CD8-positive, alpha-beta memory T cell (primary cell): ENCODE measurements at regions of chr17 and their contacts with region 1.

Region 1: DNA sequence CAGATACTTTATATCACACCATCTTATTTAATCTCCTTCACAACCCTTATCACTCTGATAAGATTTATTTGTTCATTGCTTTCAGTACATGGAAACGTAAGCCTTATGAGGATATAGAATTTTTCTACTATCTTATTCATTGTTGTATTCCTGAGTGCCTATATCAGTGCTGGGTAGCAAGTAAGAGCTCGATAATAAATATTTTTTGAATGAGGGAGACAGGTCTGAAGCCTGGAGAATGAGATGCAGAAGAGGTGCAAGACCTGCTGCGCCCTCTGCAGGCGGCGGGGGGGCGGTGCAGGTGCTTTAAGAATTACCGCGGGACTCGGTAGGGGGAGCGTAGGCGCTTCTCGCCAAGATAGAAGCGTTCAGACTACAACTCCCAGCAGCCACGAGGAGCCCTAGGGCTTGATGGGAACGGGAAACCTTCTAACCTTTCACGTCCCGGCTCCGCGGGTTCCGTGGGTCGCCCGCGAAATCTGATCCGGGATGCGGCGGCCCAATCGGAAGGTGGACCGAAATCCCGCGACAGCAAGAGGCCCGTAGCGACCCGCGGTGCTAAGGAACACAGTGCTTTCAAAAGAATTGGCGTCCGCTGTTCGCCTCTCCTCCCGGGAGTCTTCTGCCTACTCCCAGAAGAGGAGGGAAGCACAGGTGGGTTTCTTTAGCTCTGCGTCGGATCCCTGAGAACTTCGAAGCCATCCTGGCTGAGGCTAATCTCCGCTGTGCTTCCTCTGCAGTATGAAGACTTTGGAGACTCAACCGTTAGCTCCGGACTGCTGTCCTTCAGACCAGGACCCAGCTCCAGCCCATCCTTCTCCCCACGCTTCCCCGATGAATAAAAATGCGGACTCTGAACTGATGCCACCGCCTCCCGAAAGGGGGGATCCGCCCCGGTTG is at the start of gene WRAP53:
- DNase-seq: peak; percentile 88 to 96 (median 94)
- H3K4me3 ChIP-seq: peak within 1 kb of the TSS; percentile 99
- H3K4me3 Mint-ChIP-seq: peak within 1 kb of the TSS; percentile 93 to 99 (median 98)
- H3K27ac ChIP-seq: peak within 1 kb of the TSS; percentile 99
- H3K27ac Mint-ChIP-seq: peak within 1 kb of the TSS; percentile 98 to 100 (median 100)
- H3K4me1 ChIP-seq: peaks cover 37% of the 10 kb centered on the region
- H3K4me1 Mint-ChIP-seq: peaks cover 39 to 55% (median 44%) of the 10 kb centered on the region in 3 donors
- H3K27me3 ChIP-seq: no peaks in the 10 kb centered on the region
- H3K27me3 Mint-ChIP-seq: peaks cover 0 to 7% of the 10 kb centered on the region in 2 donors
- total RNA-seq, gene WRAP53: 29.1 to 31.3 TPM

Region 2: DNA sequence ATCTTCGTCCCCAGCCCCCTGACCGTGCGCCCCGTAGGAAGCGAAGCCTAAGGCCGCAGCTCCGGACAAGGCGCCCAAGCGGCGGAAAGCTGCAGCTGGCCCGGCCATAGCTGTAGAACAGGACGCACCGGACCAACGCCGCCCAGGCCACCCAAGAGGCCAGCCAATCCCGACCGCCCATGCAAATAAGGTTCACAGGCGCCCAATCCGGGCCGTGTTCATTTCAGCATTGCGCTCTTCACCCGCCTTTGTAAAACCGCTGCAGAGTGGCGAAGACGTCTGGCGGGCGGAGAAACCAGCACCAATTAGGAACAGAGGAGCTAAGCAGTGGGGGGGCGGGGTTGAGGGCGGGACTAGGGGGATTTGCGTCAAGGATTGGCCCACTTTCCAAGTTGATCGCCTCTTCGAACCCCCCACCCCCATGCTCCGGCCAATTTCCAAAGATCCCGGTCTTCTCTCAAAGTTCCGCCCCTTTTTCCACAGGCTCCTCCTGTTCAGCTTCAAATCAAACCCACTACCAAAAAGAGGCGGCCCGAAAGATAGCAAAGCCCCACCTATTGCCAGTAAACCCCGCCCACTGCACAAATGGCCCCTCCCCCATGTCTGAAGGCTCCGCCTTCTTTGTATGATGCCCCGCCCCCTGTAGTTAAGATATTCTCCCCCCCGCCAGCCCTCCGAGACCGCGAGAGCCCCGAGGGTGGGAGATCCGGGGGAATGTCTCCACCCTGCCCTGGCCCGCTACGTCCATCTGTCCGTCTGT is 284.0 kb before region 1 on chr17 and contains the start of gene TMEM256:
- CTCF ChIA-PET with region 1: interaction called, 5 read pairs
- POLR2A ChIA-PET with region 1: interaction called, 10 read pairs
- DNase-seq: peak; percentile 91 to 97 (median 95)
- H3K4me3 ChIP-seq: peak within 1 kb of the TSS; percentile 90
- H3K4me3 Mint-ChIP-seq: peak within 1 kb of the TSS; percentile 90 to 99 (median 97)
- H3K27ac ChIP-seq: peak within 1 kb of the TSS; percentile 67
- H3K27ac Mint-ChIP-seq: peak within 1 kb of the TSS; percentile 83 to 99 (median 96)
- H3K4me1 ChIP-seq: peaks cover 16% of the 10 kb centered on the region
- H3K4me1 Mint-ChIP-seq: peaks cover 17 to 36% (median 21%) of the 10 kb centered on the region in 3 donors
- H3K27me3 ChIP-seq: no peaks in the 10 kb centered on the region
- H3K27me3 Mint-ChIP-seq: peaks cover 0 to 2% of the 10 kb centered on the region in 2 donors
- total RNA-seq, gene TMEM256: 45.4 to 51.4 TPM

Region 3: GRCh38 chr17:7515911-7516610 is 172.1 kb before region 1 on chr17:
- CTCF ChIA-PET with region 1: interaction called, 18 read pairs
- POLR2A ChIA-PET with region 1: interaction called, 9 read pairs
- DNase-seq: no peak
- H3K4me3 ChIP-seq: no peak overlapping the region
- H3K4me3 Mint-ChIP-seq: no peak overlapping the region
- H3K27ac ChIP-seq: no peak overlapping the region
- H3K27ac Mint-ChIP-seq: peak overlapping the region in 4 of 8 donors; percentile 29 to 79 (median 63)
- H3K4me1 ChIP-seq: no peaks in the 10 kb centered on the region
- H3K4me1 Mint-ChIP-seq: no peaks in the 10 kb centered on the region
- H3K27me3 ChIP-seq: no peaks in the 10 kb centered on the region
- H3K27me3 Mint-ChIP-seq: no peaks in the 10 kb centered on the region

Region 4: GRCh38 chr17:7583253-7584109 is 104.7 kb before region 1 on chr17 and contains the start of gene MPDU1:
- CTCF ChIA-PET with region 1: interaction called, 33 read pairs
- POLR2A ChIA-PET with region 1: interaction called, 70 read pairs
- DNase-seq: peak; percentile 90 to 97 (median 96)
- H3K4me3 ChIP-seq: peak within 1 kb of the TSS; percentile 98
- H3K4me3 Mint-ChIP-seq: peak within 1 kb of the TSS; percentile 99 to 100 (median 99)
- H3K27ac ChIP-seq: peak within 1 kb of the TSS; percentile 98
- H3K27ac Mint-ChIP-seq: peak within 1 kb of the TSS; percentile 99 to 100 (median 100)
- H3K4me1 ChIP-seq: peaks cover 40% of the 10 kb centered on the region
- H3K4me1 Mint-ChIP-seq: peaks cover 50 to 60% (median 52%) of the 10 kb centered on the region in 3 donors
- H3K27me3 ChIP-seq: no peaks in the 10 kb centered on the region
- H3K27me3 Mint-ChIP-seq: peaks cover 0 to 4% of the 10 kb centered on the region in 2 donors
- total RNA-seq, gene MPDU1: 115 to 124 TPM

Region 5: GRCh38 chr17:7614422-7615264 is 73.5 kb before region 1 on chr17 and contains the start of gene FXR2:
- CTCF ChIA-PET with region 1: interaction called, 29 read pairs
- POLR2A ChIA-PET with region 1: interaction called, 61 read pairs
- DNase-seq: peak; percentile 98 to 99 (median 98)
- H3K4me3 ChIP-seq: peak within 1 kb of the TSS; percentile 93
- H3K4me3 Mint-ChIP-seq: peak within 1 kb of the TSS; percentile 82 to 96 (median 92)
- H3K27ac ChIP-seq: peak within 1 kb of the TSS; percentile 88
- H3K27ac Mint-ChIP-seq: peak within 1 kb of the TSS; percentile 87 to 99 (median 96)
- H3K4me1 ChIP-seq: peaks cover 26% of the 10 kb centered on the region
- H3K4me1 Mint-ChIP-seq: peaks cover 31 to 41% (median 36%) of the 10 kb centered on the region in 3 donors
- H3K27me3 ChIP-seq: no peaks in the 10 kb centered on the region
- H3K27me3 Mint-ChIP-seq: no peaks in the 10 kb centered on the region
- total RNA-seq, gene FXR2: 45.7 to 45.9 TPM

Region 6: GRCh38 chr17:7632492-7632894 is 55.7 kb before region 1 on chr17:
- CTCF ChIA-PET with region 1: interaction called, 33 read pairs
- POLR2A ChIA-PET with region 1: interaction called, 42 read pairs
- DNase-seq: no peak
- H3K4me3 ChIP-seq: no peak overlapping the region
- H3K4me3 Mint-ChIP-seq: peak overlapping the region in 1 of 7 donors; percentile 77
- H3K27ac ChIP-seq: no peak overlapping the region
- H3K27ac Mint-ChIP-seq: peak overlapping the region in 1 of 8 donors; percentile 31
- H3K4me1 ChIP-seq: no peaks in the 10 kb centered on the region
- H3K4me1 Mint-ChIP-seq: peaks cover 3 to 5% (median 4%) of the 10 kb centered on the region in 3 donors
- H3K27me3 ChIP-seq: no peaks in the 10 kb centered on the region
- H3K27me3 Mint-ChIP-seq: no peaks in the 10 kb centered on the region

Region 7: DNA sequence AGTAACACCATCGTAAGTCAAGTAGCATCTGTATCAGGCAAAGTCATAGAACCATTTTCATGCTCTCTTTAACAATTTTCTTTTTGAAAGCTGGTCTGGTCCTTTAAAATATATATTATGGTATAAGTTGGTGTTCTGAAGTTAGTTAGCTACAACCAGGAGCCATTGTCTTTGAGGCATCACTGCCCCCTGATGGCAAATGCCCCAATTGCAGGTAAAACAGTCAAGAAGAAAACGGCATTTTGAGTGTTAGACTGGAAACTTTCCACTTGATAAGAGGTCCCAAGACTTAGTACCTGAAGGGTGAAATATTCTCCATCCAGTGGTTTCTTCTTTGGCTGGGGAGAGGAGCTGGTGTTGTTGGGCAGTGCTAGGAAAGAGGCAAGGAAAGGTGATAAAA is 14.9 kb before region 1 on chr17:
- CTCF ChIA-PET with region 1: interaction called, 25 read pairs
- POLR2A ChIA-PET with region 1: interaction called, 9 read pairs
- DNase-seq: peak in 1 of 5 donors; percentile 21
- H3K4me3 ChIP-seq: no peak overlapping the region
- H3K4me3 Mint-ChIP-seq: no peak overlapping the region
- H3K27ac ChIP-seq: no peak overlapping the region
- H3K27ac Mint-ChIP-seq: no peak overlapping the region
- H3K4me1 ChIP-seq: no peaks in the 10 kb centered on the region
- H3K4me1 Mint-ChIP-seq: peaks cover 5 to 8% (median 5%) of the 10 kb centered on the region in 3 donors
- H3K27me3 ChIP-seq: no peaks in the 10 kb centered on the region
- H3K27me3 Mint-ChIP-seq: no peaks in the 10 kb centered on the region